CD4-positive, alpha-beta memory T cell (primary cell): ENCODE measurements at regions of chr1 and their contacts with region 1.

Region 1: GRCh38 chr1:26233903-26234643 is at the start of gene CEP85:
- DNase-seq: peak; percentile 98 to 99 (median 98)
- H3K4me3 ChIP-seq: peak within 1 kb of the TSS; percentile 90 to 97
- H3K4me3 Mint-ChIP-seq: peak within 1 kb of the TSS; percentile 92 to 100 (median 98)
- H3K27ac ChIP-seq: peak within 1 kb of the TSS; percentile 77
- H3K27ac Mint-ChIP-seq: peak within 1 kb of the TSS; percentile 84 to 100 (median 97)
- H3K4me1 ChIP-seq: peaks cover 26% of the 10 kb centered on the region
- H3K4me1 Mint-ChIP-seq: peaks cover 18 to 43% (median 33%) of the 10 kb centered on the region in 4 donors
- H3K27me3 ChIP-seq: no peaks in the 10 kb centered on the region
- H3K27me3 Mint-ChIP-seq: peaks cover 0 to 1% of the 10 kb centered on the region in 2 donors
- total RNA-seq, gene CEP85: 20.4 to 21.9 TPM

Region 2: DNA sequence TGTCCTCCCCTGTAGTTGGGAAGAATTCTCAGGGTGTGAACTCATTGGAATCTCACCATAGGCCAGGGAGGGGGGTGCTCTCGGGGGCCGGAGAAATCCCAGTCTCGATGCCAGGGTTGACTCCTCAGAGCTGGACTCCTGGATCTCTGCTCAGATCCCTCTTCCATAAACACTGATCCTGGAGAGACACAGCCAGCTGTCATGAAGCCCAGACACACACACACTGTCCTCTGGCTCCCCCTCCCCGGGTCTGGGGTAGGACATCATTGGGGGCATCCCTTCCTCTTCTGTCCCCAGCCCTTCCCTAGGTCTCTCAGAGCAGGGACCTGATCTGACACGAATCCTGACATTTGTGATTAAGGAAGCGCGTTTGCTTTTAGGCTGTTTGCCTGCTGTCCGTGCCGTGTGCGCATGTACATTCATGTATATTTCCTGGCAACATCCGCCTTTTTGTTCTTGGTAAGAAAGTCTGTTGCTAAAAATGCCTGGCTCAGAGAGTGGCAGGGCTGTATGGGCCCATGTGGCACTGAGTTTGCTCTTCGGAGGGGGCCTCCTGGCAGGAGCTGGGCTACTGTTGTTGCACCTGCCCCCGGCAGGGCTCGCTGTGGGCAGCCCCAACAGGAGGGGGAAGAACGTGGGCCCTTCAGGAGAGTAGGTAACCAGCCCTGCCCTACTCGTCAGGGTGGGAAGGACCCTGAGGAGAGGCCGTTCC is 479.4 kb before region 1 on chr1:
- CTCF ChIA-PET with region 1: no interaction called
- POLR2A ChIA-PET with region 1: no interaction called
- intact Hi-C with region 1: no loop called
- DNase-seq: no peak
- H3K4me3 ChIP-seq: no peak overlapping the region
- H3K4me3 Mint-ChIP-seq: peak overlapping the region in 4 of 8 donors; percentile 15 to 41 (median 37)
- H3K27ac ChIP-seq: no peak overlapping the region
- H3K27ac Mint-ChIP-seq: peak overlapping the region; percentile 46 to 84 (median 68)
- H3K4me1 ChIP-seq: peaks cover 18% of the 10 kb centered on the region
- H3K4me1 Mint-ChIP-seq: peaks cover 21 to 49% (median 22%) of the 10 kb centered on the region in 4 donors
- H3K27me3 ChIP-seq: no peaks in the 10 kb centered on the region
- H3K27me3 Mint-ChIP-seq: no peaks in the 10 kb centered on the region

Region 3: DNA sequence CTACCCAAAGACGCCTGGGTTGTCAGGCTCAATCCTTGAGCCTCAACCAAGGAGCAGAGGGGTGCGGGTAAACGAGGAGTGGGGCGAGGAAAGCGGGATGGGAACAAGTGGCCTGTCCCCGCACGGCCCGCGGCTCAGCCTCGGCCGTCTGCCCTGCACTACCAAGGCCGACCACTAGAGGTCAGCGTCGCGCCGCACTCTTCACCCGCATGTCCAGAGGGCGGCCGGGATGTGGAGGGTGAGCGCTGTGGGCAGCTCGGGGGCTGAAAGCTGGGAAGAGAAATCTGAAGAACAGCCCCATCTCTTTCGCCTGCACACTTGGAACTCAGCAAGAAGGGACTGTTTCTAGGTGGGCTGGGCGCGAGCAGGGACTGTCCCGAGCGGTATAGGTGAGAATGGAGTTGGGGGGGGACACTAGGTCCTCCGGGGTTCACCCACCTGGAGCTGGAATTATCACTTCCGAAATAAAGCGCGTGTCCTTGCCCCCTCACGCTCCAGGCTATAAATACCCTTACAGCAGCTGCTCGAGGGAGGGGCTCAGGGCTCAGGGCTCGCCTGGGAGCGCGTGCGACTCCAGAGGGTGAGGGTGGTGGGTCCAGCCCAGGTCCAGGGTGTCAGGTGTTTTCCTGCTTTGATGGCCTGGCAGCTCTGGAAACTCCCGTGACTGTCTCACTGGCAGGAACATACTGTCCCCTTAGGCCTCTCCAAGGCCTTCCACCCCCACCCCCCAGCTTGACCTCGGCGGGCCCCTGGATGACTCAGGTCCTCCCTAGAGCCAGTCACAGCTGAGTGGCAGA is 197.9 kb before region 1 on chr1:
- CTCF ChIA-PET with region 1: interaction called, 4 read pairs
- POLR2A ChIA-PET with region 1: no interaction called
- intact Hi-C with region 1: loop called (anchors 5 kb)
- DNase-seq: peak; percentile 67 to 81 (median 69)
- H3K4me3 ChIP-seq: peak overlapping the region; percentile 48 to 84
- H3K4me3 Mint-ChIP-seq: peak overlapping the region; percentile 94 to 99 (median 95)
- H3K27ac ChIP-seq: peak overlapping the region; percentile 77
- H3K27ac Mint-ChIP-seq: peak overlapping the region; percentile 89 to 97 (median 95)
- H3K4me1 ChIP-seq: peaks cover 15% of the 10 kb centered on the region
- H3K4me1 Mint-ChIP-seq: peaks cover 2 to 21% (median 11%) of the 10 kb centered on the region in 4 donors
- H3K27me3 ChIP-seq: no peaks in the 10 kb centered on the region
- H3K27me3 Mint-ChIP-seq: peaks cover 2 to 3% of the 10 kb centered on the region in 2 donors

Region 4: DNA sequence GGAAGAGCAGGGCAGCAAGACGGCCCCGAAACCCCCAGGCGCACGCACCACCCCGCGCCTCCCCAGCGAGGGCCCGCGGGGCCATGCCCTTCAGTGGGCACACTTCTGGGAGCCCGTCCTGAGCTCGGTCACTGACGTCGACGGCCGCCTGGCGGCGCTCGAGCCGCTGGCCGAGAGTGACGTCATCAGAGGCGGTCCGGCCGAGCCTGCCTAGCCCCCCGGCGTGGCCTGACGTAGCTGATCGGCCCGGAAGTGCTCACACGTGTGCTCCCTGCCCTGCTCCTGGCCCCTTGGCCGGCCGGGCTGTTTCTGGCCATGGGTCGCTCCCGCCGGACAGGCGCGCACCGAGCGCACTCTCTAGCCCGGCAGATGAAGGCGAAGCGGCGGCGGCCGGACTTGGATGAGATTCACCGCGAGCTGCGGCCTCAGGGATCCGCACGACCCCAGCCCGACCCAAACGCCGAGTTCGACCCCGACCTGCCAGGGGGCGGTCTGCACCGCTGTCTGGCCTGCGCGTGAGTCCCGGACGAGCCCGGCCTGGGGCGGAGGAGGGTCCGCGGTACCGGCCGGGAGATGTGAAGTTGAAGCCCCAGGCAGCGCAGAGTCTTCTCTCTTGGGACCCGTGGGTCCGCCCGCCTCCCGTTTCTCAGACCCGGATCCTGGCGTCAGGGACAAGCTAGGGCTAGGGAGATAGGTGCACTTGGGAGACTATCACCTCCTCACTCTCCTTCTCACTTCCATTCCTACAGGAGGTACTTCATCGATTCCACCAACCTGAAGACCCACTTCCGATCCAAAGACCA is 64.2 kb before region 1 on chr1 and contains the start of gene ZNF593:
- CTCF ChIA-PET with region 1: interaction called, 167 read pairs
- POLR2A ChIA-PET with region 1: interaction called, 40 read pairs
- intact Hi-C with region 1: loop called (anchors 1 kb)
- DNase-seq: peak; percentile 74 to 81 (median 77)
- H3K4me3 ChIP-seq: peak within 1 kb of the TSS; percentile 52 to 90
- H3K4me3 Mint-ChIP-seq: peak within 1 kb of the TSS; percentile 83 to 91 (median 88)
- H3K27ac ChIP-seq: peak within 1 kb of the TSS; percentile 85
- H3K27ac Mint-ChIP-seq: peak within 1 kb of the TSS; percentile 71 to 94 (median 93)
- H3K4me1 ChIP-seq: peaks cover 20% of the 10 kb centered on the region
- H3K4me1 Mint-ChIP-seq: peaks cover 4 to 25% (median 16%) of the 10 kb centered on the region in 4 donors
- H3K27me3 ChIP-seq: no peaks in the 10 kb centered on the region
- H3K27me3 Mint-ChIP-seq: no peaks in the 10 kb centered on the region
- total RNA-seq, gene ZNF593: 10.7 to 12.4 TPM

Region 5: GRCh38 chr1:26218906-26219494 is 15.1 kb before region 1 on chr1:
- CTCF ChIA-PET with region 1: interaction called, 13 read pairs
- POLR2A ChIA-PET with region 1: no interaction called
- intact Hi-C with region 1: no loop called
- DNase-seq: no peak
- H3K4me3 ChIP-seq: no peak overlapping the region
- H3K4me3 Mint-ChIP-seq: no peak overlapping the region
- H3K27ac ChIP-seq: no peak overlapping the region
- H3K27ac Mint-ChIP-seq: no peak overlapping the region
- H3K4me1 ChIP-seq: no peaks in the 10 kb centered on the region
- H3K4me1 Mint-ChIP-seq: peaks cover 0 to 2% (median 0%) of the 10 kb centered on the region in 4 donors
- H3K27me3 ChIP-seq: no peaks in the 10 kb centered on the region
- H3K27me3 Mint-ChIP-seq: peaks cover 0 to 3% of the 10 kb centered on the region in 2 donors

Region 6: GRCh38 chr1:26321315-26322041 is 87.4 kb after region 1 on chr1:
- CTCF ChIA-PET with region 1: interaction called, 17 read pairs
- POLR2A ChIA-PET with region 1: interaction called, 44 read pairs
- intact Hi-C with region 1: loop called (anchors 1 kb)
- DNase-seq: peak; percentile 88 to 95 (median 91)
- H3K4me3 ChIP-seq: peak overlapping the region in 1 of 2 donors; percentile 94
- H3K4me3 Mint-ChIP-seq: peak overlapping the region; percentile 91 to 100 (median 96)
- H3K27ac ChIP-seq: peak overlapping the region; percentile 69
- H3K27ac Mint-ChIP-seq: peak overlapping the region; percentile 83 to 99 (median 95)
- H3K4me1 ChIP-seq: peaks cover 48% of the 10 kb centered on the region
- H3K4me1 Mint-ChIP-seq: peaks cover 30 to 64% (median 47%) of the 10 kb centered on the region in 4 donors
- H3K27me3 ChIP-seq: no peaks in the 10 kb centered on the region
- H3K27me3 Mint-ChIP-seq: no peaks in the 10 kb centered on the region

Region 7: GRCh38 chr1:26399034-26399433 is 165.0 kb after region 1 on chr1:
- CTCF ChIA-PET with region 1: interaction called, 17 read pairs
- POLR2A ChIA-PET with region 1: no interaction called
- intact Hi-C with region 1: no loop called
- DNase-seq: no peak
- H3K4me3 ChIP-seq: no peak overlapping the region
- H3K4me3 Mint-ChIP-seq: no peak overlapping the region
- H3K27ac ChIP-seq: no peak overlapping the region
- H3K27ac Mint-ChIP-seq: no peak overlapping the region
- H3K4me1 ChIP-seq: no peaks in the 10 kb centered on the region
- H3K4me1 Mint-ChIP-seq: peaks cover 3 to 6% (median 5%) of the 10 kb centered on the region in 4 donors
- H3K27me3 ChIP-seq: no peaks in the 10 kb centered on the region
- H3K27me3 Mint-ChIP-seq: peaks cover 8 to 9% of the 10 kb centered on the region in 2 donors